ENCODE measurements at regions of chr21 and their contacts with region 1.

Region 1: GRCh38 chr21:39788383-39788782 is 43.4 kb downstream of the IGSF5 start:
- DNase-seq: peak; percentile 85
- ATAC-seq: peak; percentile 99 to 100

Region 2: DNA sequence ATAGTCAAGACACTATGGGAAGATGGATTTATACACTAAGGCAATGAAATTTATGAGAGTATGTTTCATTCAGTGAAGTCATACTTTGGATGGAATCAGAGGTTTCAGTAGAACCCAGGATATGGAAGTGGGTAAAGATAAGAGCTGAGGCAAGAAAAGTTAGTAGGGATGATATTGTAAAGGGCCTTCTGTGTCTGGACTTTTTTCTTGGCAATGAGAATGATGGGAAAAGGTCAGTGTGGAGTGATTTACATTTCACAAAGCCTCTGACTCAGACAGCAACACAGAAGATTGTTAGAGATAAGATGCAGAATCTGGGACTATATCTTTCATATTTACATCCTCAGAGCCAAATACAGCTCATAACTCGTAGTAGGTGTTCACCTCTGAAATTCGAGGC is 304.5 kb before region 1 on chr21:
- intact Hi-C with region 1: no loop called
- DNase-seq: no peak
- ATAC-seq: no peak

Region 3: GRCh38 chr21:39911286-39912199 is 123.2 kb after region 1 on chr21:
- intact Hi-C with region 1: loop called in 1 of 2 experiments (anchors 2 kb)
- DNase-seq: no peak
- ATAC-seq: no peak

Measured in left cardiac atrium (tissue), 4 donors.